ENCODE measurements at regions of chr12 and their contacts with region 1.

Region 1: DNA sequence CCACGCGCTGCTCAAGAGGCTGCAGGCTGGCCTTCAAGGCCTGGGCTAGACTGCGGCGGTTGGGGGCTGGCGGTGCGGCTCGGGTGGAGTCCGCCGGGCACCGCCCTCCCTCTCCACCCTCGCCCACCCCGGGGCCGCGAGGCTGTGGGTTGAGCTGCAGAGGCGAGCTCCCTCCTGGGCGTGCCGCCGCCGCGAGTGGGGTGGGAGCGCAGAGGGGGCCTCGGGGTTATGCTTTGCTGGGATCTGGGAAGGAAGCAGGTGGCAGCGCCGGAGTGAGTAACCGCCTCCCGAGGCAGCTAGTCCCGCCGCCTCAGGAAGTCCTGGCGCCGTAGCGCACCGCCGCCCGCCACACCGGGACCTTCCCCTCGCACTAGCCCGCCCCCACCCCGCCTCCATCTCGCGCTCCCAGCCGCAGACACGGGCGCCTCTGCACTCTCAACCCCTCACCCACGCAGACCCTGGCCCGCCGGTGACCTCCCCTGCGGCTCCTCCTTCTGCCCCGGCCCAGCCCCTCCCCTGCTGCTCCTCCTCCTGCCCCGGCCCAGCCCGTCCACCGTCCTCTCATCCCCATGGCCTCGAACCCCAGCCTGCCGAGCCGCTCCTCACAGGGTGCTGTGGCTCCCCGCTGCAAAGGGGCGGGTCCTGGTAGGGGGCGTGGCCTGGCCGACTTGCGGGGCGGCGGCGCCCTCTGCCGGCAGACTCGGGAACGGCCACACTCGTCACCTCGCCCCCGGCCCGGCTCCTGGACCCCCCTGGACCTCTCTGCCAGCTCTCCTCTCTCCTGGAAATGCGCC is 16.6 kb downstream of the TAMALIN start:
- DNase-seq: peak; percentile 35 to 83
- H3K4me3 ChIP-seq: peak overlapping the region; percentile 71
- H3K27ac ChIP-seq: no peak overlapping the region
- H3K4me1 ChIP-seq: 0 out of 2 replicates have a peak, but pooled peaks cover 6% of the 10 kb centered on the region
- H3K27me3 ChIP-seq: peaks cover 4% of the 10 kb centered on the region; the same call in 1 of the 2 replicates
- CTCF ChIP-seq: peak; percentile 96

Region 2: DNA sequence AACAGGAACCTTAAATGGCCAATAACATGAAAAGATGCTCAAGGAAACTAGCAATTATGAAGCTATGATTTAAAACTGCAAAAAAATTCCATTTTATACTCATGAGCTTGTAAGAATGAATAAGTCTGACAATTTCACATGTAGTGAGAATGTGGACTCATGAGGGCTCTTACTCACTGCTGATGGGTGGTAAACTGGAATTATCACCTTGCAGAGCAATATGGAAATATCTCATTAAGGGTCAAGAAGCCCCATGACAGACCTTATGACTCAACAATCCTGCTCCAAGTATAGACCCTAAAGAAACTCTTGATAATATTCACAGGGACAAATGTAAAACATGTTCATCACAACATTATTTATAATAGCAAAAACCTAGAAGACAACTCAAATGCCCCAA is 729.7 kb before region 1 on chr12:
- CTCF ChIA-PET with region 1: interaction called, 10 read pairs
- POLR2A ChIA-PET with region 1: no interaction called
- intact Hi-C with region 1: no loop called
- DNase-seq: peak in 1 of 2 experiments; percentile 42
- H3K4me3 ChIP-seq: no peak overlapping the region
- H3K27ac ChIP-seq: no peak overlapping the region
- H3K4me1 ChIP-seq: peaks cover 23% of the 10 kb centered on the region
- H3K27me3 ChIP-seq: no peaks in the 10 kb centered on the region
- CTCF ChIP-seq: no peak

Region 3: GRCh38 chr12:51911788-51912711 is 111.3 kb before region 1 on chr12:
- CTCF ChIA-PET with region 1: interaction called, 10 read pairs
- POLR2A ChIA-PET with region 1: no interaction called
- intact Hi-C with region 1: no loop called
- DNase-seq: no peak
- H3K4me3 ChIP-seq: no peak overlapping the region
- H3K27ac ChIP-seq: no peak overlapping the region
- H3K4me1 ChIP-seq: no peaks in the 10 kb centered on the region
- H3K27me3 ChIP-seq: peaks cover 47% of the 10 kb centered on the region
- CTCF ChIP-seq: no peak

Region 4: DNA sequence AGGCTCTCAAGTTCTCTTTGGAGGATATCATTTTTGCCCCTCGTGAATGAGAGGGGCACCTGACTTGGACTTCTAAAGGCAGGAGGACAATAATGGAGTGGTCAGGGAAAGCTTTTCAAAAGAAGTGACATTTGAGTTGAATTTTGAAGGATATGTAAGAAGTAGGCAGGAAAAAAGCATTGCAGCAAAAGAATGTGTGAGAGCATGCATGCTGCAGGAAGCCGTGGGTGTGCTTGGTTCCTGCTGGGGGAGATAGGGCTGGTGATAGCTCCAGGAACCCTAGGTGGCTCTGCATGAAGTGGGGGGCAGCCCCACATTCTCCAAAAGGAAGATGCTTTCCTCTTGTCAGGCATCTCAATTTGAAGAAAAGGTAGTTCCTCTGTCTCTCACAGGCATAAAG is 48.7 kb before region 1 on chr12:
- CTCF ChIA-PET with region 1: no interaction called
- POLR2A ChIA-PET with region 1: no interaction called
- intact Hi-C with region 1: no loop called
- DNase-seq: no peak
- H3K4me3 ChIP-seq: no peak overlapping the region
- H3K27ac ChIP-seq: no peak overlapping the region
- H3K4me1 ChIP-seq: 0 out of 2 replicates have a peak, but pooled peaks cover 3% of the 10 kb centered on the region
- H3K27me3 ChIP-seq: no peaks in the 10 kb centered on the region
- CTCF ChIP-seq: no peak

Region 5: DNA sequence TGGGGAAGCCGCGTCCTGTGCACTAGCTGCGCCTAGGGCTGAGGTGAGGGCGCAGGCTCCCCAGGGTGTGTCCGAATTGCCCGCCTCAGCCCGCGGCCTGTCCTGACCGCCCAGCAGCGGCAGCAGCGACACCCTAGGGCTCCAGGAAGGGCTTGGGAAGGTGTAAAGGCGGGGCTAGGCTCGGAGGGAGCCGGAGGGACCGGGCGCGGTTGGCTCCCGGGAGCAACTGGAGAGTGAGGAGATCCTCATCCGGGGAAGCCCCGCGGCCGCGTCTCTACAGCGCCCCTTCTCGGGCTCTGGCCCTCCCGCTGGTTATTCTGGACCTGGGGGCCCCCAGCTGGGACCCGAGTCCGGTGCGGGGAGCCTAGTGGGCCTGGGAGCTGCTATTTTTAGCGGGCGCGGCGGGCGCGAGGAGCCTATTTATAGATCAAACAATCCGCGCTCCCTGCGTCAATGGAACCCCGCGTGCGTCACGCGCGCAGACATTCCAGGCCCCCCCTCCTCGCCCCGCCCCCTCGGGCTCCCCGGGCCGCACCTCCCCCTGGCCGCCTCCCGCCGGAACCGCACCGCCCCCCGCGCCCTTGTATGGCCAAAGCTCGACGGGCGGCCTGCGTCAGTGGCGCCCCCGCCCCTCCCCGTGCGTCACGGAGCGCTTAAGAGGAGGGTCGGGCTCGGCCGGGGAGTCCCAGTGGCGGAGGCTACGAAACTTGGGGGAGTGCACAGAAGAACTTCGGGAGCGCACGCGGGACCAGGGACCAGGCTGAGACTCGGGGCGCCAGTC is 27.6 kb after region 1 on chr12 and contains the start of gene NR4A1:
- CTCF ChIA-PET with region 1: interaction called, 5 read pairs
- POLR2A ChIA-PET with region 1: interaction called, 13 read pairs
- intact Hi-C with region 1: no loop called
- DNase-seq: peak; percentile 66 to 94
- H3K4me3 ChIP-seq: peak within 1 kb of the TSS; percentile 64
- H3K27ac ChIP-seq: no peak within 1 kb of the TSS
- H3K4me1 ChIP-seq: peaks cover 20% of the 10 kb centered on the region
- H3K27me3 ChIP-seq: no peaks in the 10 kb centered on the region
- CTCF ChIP-seq: no peak
- total RNA-seq, gene NR4A1: 6.5 and 13.4 TPM in 2 replicates

Region 6: DNA sequence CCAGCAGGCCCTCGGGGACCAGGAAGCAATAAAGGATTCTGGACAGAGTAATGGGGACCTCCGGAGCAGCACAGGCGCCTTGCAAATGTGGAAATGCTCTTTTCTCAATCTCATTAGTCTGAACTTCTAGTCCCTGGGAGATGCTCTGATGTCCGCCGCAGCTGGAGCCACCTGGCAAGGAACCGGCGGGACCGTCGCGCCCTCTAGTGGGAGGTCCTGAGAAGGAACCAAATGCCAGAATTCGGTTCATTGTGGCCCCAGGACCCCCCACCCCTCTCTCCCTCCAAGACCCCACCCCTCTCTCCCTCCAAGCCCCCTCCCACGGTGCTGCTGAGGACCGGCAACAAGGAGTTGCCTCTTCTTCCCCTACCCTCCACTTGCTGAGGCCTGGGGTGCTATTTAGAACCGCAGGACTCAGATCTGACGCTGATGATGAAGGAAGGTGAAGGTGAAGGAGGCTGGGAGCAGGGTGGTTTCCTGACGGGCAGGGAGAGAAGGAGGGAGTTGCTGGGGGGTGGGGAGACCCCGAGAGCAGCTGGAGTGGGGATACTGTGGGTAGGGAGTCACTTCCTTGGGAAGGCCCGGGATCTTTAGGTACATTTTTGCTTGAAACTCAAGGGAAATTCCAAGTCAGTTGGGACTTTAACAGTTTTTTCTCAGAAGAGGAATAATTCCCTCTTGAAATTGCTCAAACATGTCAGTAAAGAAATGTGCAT is 98.6 kb after region 1 on chr12:
- CTCF ChIA-PET with region 1: interaction called, 25 read pairs
- POLR2A ChIA-PET with region 1: no interaction called
- intact Hi-C with region 1: loop called (anchors 1 kb)
- DNase-seq: peak; percentile 36 to 56
- H3K4me3 ChIP-seq: no peak overlapping the region
- H3K27ac ChIP-seq: no peak overlapping the region
- H3K4me1 ChIP-seq: peaks cover 8% of the 10 kb centered on the region
- H3K27me3 ChIP-seq: no peaks in the 10 kb centered on the region
- CTCF ChIP-seq: peak; percentile 80

Region 7: DNA sequence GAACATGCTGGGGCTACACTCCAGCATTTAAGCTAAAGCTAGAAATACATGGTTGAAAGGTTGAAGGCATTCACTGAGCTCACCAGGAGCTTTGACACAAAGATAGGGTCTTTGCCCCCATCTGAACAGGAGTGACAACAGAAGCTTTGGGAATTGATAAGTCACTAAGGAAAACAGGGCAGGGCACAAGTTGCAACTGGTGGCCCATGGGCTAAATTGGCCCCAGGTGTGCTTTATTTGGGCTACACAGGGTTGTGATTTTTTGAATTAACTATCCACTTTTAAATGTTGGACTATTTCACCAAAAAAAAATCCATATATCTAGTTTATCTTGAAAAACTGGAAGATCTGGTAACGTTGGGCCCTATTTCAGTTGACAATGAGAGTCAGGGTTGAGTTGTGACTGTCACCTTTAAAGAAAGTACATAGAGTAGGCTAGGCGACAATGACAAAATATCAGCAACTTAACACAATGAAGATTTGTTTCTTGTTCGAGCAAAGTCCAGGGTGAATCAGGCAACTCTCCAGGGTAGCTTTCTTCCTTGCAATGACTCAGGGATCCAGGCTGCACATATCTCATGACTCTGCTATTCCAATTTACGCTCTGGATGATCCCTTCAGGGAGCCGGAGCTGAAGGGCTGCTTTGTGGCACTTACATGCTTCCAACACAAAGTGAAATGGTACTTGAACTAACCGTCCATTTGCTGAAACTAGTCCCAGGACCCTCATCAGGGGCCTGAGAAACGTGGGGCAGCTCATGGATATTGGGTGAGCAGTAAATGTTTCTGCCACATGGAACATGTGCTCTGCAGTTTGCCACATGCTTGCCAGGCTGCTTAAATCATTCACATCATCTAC is 969.5 kb after region 1 on chr12:
- CTCF ChIA-PET with region 1: interaction called, 15 read pairs
- POLR2A ChIA-PET with region 1: no interaction called
- intact Hi-C with region 1: no loop called
- DNase-seq: peak; percentile 43 to 85
- H3K4me3 ChIP-seq: peak overlapping the region; percentile 18; the same call in 1 of the 2 replicates
- H3K27ac ChIP-seq: peak overlapping the region; percentile 90
- H3K4me1 ChIP-seq: peaks cover 35% of the 10 kb centered on the region
- H3K27me3 ChIP-seq: no peaks in the 10 kb centered on the region
- CTCF ChIP-seq: no peak